Motor neuron (in vitro differentiated cells): ENCODE measurements at regions of chr15 and their contacts with region 1.

Region 1: DNA sequence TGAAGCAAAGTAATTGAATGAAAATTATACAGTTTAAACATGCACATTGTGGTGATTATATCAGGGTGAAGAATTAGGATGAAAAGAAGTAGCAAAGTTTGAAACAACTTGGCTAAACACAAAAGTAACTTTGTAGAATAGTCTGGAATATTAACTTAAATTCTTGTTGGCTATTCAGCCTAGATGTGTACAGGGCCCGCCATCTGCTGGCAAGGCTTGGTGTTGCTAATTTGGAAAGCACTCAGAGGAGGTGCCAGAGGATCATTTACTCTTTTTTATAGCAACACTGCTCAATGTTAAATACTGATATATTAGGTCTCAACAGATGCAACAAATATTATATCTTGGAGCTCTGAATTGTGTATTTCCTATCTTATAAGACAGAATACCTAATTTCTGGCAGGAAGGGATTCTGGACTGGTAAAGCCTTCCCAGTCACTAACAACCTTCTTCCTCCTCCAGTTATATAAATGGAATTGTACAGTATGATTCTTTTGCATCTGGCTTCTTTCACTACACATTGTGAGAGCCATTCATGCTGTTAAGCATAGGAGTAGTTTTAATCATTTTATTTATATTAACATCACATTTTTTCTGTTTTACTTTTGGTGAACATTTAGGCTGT is 36.1 kb downstream of the TTC23 start:
- ATAC-seq: peak in 7 of 8 experiments; percentile 42 to 87 (median 65)
- H3K4me3 ChIP-seq: no peak overlapping the region
- H3K27ac ChIP-seq: no peak overlapping the region
- H3K4me1 ChIP-seq: no peaks in the 10 kb centered on the region

Region 2: GRCh38 chr15:99104788-99105513 is 108.3 kb before region 1 on chr15 and contains the start of gene SYNM:
- in situ Hi-C with region 1: loop called in 2 of 9 experiments (anchors 10 kb)
- ATAC-seq: peak; percentile 72 to 85 (median 82)
- H3K4me3 ChIP-seq: peak within 1 kb of the TSS; percentile 39 to 53 (median 46)
- H3K27ac ChIP-seq: peak within 1 kb of the TSS; percentile 32 to 38
- H3K4me1 ChIP-seq: peaks cover 0 to 7% of the 10 kb centered on the region in 2 donors
- total RNA-seq, gene SYNM: 5.5 to 92.8 (median 24.7) TPM